Motor neuron (in vitro differentiated cells): ENCODE measurements at regions of chr15 and their contacts with region 1.

Region 1: DNA sequence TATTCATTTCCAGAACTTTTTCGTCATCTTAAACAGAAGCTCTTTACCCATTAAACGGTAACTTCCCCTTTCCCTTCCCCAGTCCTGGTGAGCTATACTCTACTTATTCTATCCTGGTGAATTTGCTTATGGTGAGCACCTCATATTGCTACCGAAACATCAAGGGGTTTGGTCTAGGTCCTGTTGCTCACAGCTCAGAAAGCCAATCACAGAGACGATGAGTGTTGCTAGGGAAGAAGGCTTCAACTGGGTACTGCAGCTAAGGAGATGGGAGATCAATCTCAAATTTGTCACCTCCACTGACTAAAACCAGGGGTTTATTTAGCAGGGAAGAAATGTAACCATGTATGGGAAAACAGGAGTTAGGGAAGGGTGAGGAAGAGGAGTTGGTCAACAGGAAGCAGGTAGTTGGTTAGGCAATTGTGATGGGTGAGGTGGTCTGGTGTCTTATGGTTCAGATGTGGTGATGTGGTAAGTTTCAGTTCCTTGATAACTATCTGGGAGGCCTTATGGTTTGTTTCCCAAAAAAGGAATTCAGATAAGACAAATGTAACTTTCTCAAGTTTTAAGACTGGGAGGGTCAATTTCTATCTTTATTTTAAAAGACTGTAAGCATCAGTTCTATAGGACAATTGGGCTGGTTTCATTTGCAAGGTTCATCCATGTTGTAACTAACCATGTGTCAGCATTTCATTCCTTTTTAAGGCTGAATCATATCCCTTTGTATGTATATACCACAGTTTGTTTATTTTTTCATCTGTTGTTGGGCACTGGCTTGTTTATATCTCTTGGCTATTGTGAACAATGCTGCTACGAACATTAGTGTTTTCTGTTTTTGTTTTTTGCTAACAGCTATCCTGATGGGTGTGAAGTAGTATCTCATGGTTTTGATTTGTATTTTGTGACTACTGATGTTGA is 24.3 kb downstream of the ARHGAP11B start:
- ATAC-seq: no peak
- H3K4me3 ChIP-seq: no peak overlapping the region
- H3K27ac ChIP-seq: no peak overlapping the region
- H3K4me1 ChIP-seq: no peaks in the 10 kb centered on the region

Region 2: GRCh38 chr15:30770759-30771158 is 120.5 kb after region 1 on chr15:
- in situ Hi-C with region 1: loop called in 1 of 9 experiments (anchors 25 kb)
- ATAC-seq: no peak
- H3K4me3 ChIP-seq: no peak overlapping the region
- H3K27ac ChIP-seq: no peak overlapping the region
- H3K4me1 ChIP-seq: no peaks in the 10 kb centered on the region